Psoas muscle (tissue), 8 donors: ENCODE measurements at regions of chr3 and their contacts with region 1.

Region 1: GRCh38 chr3:189685854-189686253 is 54.7 kb downstream of the TP63 start:
- DNase-seq: no peak
- ATAC-seq: no peak
- H3K4me3 ChIP-seq: no peak overlapping the region
- H3K27ac ChIP-seq: no peak overlapping the region
- H3K4me1 ChIP-seq: peaks cover 55% of the 10 kb centered on the region
- H3K27me3 ChIP-seq: no peaks in the 10 kb centered on the region
- CTCF ChIP-seq: no peak

Region 2: DNA sequence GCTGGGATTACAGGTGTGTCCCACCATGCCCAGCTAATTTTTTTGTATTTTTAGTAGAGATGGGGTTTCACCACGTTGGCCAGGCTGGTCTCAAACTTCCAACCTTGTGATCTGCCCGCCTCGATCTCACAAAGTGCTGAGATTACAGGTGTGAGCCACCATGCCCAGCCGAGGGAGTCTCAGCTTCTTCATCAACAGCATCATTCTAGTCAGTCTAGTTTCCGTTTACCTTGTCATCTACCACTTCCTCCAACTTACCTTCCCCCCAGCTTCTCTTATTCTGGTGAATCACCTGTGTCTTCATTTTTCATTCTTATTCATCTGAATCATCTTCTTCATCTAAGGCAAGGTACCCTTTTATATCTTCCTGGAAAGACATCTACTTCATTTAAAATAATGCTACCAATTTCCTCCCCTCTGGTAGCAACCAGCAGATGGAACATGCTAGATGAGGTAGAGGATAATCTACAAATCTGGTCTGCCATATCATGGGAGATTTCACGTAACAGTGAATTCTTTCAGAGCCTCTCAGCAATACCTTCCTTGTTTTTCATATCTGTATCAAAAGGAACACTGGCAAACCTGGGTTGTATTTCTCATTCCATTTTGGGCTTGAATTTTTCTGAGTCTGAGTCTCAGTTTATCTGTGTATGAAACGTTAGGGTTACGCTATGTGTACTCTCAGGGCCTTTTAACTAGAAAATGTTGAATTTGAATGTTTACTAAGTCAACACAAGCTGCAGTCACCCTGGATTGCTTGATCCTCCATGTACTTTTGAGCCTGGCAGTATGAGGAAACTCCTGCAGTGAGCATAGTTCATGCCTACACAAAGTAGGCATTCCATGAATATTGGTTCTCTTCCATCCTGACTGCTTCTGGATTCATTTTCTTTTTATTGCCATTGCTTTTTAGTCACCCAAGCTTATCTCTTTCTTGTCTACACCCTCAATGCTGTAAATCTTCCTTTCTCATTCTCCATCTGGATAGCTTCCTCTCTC is 1515.1 kb before region 1 on chr3:
- intact Hi-C with region 1: no loop called
- DNase-seq: no peak
- ATAC-seq: no peak
- H3K4me3 ChIP-seq: no peak overlapping the region
- H3K27ac ChIP-seq: peak overlapping the region; percentile 0
- H3K4me1 ChIP-seq: peaks cover 51% of the 10 kb centered on the region
- H3K27me3 ChIP-seq: no peaks in the 10 kb centered on the region
- CTCF ChIP-seq: no peak

Region 3: DNA sequence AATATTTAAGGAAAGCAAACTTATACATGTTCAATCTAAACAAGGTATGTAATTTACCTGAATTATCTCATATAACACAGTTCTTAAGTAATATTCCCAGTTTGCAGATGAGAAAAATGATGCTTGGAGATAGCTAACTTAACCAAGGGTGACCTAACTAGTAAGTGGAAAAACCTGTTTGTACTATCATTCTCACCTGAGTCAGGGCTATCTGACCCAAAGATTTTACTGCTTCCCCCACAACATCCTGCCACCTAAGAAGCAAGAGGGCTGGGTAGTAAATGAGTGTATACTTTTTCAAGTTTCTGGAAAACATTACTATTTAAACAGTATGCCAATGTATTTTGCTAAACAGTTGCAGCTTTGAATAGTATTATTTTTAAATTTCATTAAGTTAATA is 44.1 kb before region 1 on chr3:
- intact Hi-C with region 1: no loop called
- DNase-seq: no peak
- ATAC-seq: no peak
- H3K4me3 ChIP-seq: no peak overlapping the region
- H3K27ac ChIP-seq: no peak overlapping the region
- H3K4me1 ChIP-seq: peaks cover 28% of the 10 kb centered on the region
- H3K27me3 ChIP-seq: no peaks in the 10 kb centered on the region
- CTCF ChIP-seq: no peak

Region 4: DNA sequence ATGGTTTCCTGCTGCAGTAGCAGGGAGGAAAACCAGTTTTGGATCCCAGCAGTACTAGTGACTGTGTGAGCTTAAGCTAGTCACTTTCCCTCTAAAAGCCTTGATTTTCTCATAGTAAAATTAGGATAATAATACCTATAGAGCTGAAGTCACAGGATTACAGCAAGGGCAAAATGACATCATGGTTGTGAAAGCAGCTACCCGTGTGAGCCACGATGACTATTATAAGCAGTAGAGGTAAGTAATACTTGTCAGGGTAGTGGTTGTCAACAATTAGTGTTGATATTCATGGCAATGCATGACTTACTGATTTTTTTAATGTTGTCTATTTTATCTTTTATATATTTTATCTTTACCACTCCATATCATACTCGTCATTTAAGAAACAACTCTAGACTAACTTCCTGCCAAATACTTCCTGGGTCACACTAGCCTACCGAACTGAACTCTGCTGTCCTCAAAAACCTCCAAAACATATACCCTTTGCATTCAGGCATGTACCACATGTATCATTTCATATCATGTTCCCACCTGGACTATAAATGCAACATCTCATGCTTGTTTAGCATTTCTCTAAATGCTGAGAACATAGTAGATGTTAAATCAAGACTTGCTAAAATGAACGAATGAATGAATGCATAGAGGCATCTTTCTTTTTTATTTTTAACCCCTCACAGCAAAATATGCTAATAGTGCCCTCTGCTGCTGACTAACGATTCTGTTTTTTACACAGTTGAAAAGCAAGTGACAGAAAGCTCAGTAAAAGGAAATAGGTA is 262.3 kb after region 1 on chr3:
- intact Hi-C with region 1: loop called in 1 of 2 experiments (anchors 10 kb)
- DNase-seq: no peak
- ATAC-seq: peak; percentile 42 to 78 (median 62)
- H3K4me3 ChIP-seq: no peak overlapping the region
- H3K27ac ChIP-seq: no peak overlapping the region
- H3K4me1 ChIP-seq: peaks cover 3% of the 10 kb centered on the region
- H3K27me3 ChIP-seq: no peaks in the 10 kb centered on the region
- CTCF ChIP-seq: peak; percentile 58

Region 5: GRCh38 chr3:190089711-190090110 is 403.9 kb after region 1 on chr3:
- intact Hi-C with region 1: no loop called
- DNase-seq: no peak
- ATAC-seq: no peak
- H3K4me3 ChIP-seq: no peak overlapping the region
- H3K27ac ChIP-seq: no peak overlapping the region
- H3K4me1 ChIP-seq: no peaks in the 10 kb centered on the region
- H3K27me3 ChIP-seq: no peaks in the 10 kb centered on the region
- CTCF ChIP-seq: no peak